ENCODE measurements at regions of chr19 and their contacts with region 1.

Region 1: DNA sequence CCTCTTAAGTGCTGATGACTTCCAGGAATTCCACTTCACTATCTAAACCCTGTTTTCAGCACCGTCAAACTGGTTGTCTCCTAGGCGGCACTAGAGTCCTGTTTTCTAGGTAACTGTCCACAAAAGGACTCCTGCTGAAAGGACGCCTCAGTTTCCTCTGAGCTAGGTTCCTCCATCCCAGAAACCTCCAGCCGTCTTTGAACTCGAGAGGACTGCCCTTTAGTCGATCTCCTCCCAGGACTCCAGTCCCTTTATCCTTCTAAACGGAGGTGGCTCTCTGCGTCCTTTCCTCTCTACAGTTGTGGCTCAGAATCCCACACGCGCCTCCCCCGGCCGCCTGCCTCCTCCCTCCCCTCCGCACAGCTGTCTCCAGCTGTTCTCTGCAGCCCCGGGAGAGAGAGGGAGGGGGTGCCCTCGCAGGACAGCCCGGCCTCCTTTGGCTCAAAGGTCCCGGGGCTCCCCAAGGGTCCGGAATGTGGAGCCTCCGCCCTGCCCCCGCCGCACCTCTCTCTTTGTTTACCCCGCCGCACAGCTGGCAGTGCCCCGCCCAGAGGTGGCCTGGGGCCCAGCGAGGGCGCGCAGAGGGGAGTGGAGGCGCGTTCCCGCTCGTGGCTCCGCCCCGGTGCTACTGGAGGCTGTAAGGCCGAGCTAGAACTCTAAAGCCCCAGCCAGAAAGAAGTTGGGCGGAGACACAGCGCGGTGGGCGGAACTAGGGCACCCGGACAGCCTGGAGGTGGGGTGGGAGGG is 2.4 kb downstream of the LTBP4 start:
- DNase-seq: peak; percentile 99
- H3K4me3 ChIP-seq: peak overlapping the region; percentile 52 to 66
- H3K27ac ChIP-seq: peak overlapping the region; percentile 91 to 97
- H3K4me1 ChIP-seq: peaks cover 0 to 43% of the 10 kb centered on the region in 2 donors
- H3K27me3 ChIP-seq: no peaks in the 10 kb centered on the region
- CTCF ChIP-seq: peak in 3 of 4 experiments; percentile 4 to 20 (median 8)
- POLR2A ChIP-seq: peak; percentile 74 to 89

Region 2: DNA sequence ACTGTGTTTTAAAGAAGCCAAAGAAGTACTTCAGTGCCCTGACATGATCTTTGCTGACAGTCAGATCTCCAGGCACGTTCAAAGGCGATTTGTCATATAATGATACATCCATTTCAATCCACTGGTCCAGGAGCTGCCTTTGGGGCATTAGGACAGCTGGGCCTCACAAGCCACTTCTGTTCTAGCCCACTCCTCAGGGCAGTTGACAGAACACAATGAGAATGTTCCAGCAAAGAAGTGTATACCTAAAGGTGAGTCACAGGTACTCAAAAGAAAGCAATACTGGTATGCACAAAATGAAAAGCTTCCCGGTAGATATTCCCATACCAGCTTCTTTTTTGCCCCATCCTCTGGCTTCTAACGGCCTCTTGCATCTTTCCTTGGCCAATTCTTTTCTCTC is 424.8 kb before region 1 on chr19:
- intact Hi-C with region 1: no loop called
- DNase-seq: no peak
- H3K4me3 ChIP-seq: no peak overlapping the region
- H3K27ac ChIP-seq: no peak overlapping the region
- H3K4me1 ChIP-seq: no peaks in the 10 kb centered on the region
- H3K27me3 ChIP-seq: no peaks in the 10 kb centered on the region
- CTCF ChIP-seq: no peak
- POLR2A ChIP-seq: no peak

Region 3: GRCh38 chr19:40465557-40466150 is 137.9 kb before region 1 on chr19 and contains the start of gene BLVRB:
- intact Hi-C with region 1: loop called (anchors 10 kb)
- DNase-seq: peak; percentile 99 to 100
- H3K4me3 ChIP-seq: peak within 1 kb of the TSS; percentile 64 to 84
- H3K27ac ChIP-seq: peak within 1 kb of the TSS; percentile 87 to 92
- H3K4me1 ChIP-seq: peaks cover 0 to 6% of the 10 kb centered on the region in 2 donors
- H3K27me3 ChIP-seq: no peaks in the 10 kb centered on the region
- CTCF ChIP-seq: peak in 2 of 4 experiments; percentile 20 to 24
- POLR2A ChIP-seq: peak; percentile 91 to 94
- total RNA-seq, gene BLVRB: 51.5 to 206 (median 115) TPM